ENCODE measurements at regions of chr18 and their contacts with region 1.

Region 1: GRCh38 chr18:51789871-51790270 is 550.1 kb upstream of the DCC start:
- DNase-seq: no peak
- ATAC-seq: no peak
- H3K4me3 ChIP-seq: no peak overlapping the region
- H3K27ac ChIP-seq: no peak overlapping the region
- H3K4me1 ChIP-seq: no peaks in the 10 kb centered on the region
- H3K27me3 ChIP-seq: no peaks in the 10 kb centered on the region
- CTCF ChIP-seq: no peak
- EP300 ChIP-seq: no peak
- POLR2A ChIP-seq: no peak
- RAD21 ChIP-seq: no peak

Region 2: DNA sequence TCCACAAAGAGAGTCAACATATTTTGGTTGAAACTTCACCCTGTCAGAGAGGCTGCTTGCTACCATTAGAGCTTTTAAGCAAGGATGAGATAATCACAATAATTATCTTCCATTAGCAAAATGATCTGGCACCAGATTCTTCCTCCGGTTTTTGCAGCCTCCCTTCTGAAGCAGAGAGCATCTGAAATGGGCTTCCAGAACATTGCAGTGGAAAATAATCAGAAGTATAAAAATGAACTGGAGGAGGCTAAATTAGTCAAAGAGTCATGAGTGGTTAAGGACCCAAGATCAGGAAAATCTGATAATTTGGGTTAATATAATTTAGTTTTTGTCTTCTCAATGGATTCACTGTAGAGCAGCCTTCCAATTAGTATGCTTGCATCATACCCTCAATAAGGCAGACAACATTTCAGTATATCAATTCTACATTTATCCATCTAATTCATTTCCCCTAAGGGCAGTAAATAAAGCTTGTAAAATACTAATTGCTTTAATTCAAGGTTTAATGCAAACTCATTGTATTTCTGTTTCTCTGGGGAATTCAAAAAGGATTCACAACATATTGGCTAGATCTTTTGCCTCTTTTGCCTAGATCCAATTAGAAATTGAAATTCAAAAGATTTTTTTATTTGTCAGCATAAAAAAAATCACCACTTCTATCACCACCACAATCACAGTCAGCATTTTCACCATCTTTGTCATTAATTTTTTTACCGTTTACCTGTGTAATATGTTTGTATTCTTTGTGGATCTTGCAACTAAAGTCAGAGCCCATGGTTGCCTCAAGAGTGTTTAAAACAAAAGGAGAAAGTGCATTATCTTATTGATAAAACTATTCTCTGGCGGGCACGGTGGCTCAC is 12.9 kb after region 1 on chr18:
- CTCF ChIA-PET with region 1: interaction called, 3 read pairs
- POLR2A ChIA-PET with region 1: no interaction called
- RAD21 ChIA-PET with region 1: no interaction called
- SMC1A ChIA-PET with region 1: interaction called, 17 read pairs
- in situ Hi-C with region 1: no loop called
- intact Hi-C with region 1: no loop called
- DNase-seq: no peak
- ATAC-seq: no peak
- H3K4me3 ChIP-seq: no peak overlapping the region
- H3K27ac ChIP-seq: no peak overlapping the region
- H3K4me1 ChIP-seq: no peaks in the 10 kb centered on the region
- H3K27me3 ChIP-seq: no peaks in the 10 kb centered on the region
- CTCF ChIP-seq: no peak
- EP300 ChIP-seq: no peak
- POLR2A ChIP-seq: no peak
- RAD21 ChIP-seq: no peak

Region 3: DNA sequence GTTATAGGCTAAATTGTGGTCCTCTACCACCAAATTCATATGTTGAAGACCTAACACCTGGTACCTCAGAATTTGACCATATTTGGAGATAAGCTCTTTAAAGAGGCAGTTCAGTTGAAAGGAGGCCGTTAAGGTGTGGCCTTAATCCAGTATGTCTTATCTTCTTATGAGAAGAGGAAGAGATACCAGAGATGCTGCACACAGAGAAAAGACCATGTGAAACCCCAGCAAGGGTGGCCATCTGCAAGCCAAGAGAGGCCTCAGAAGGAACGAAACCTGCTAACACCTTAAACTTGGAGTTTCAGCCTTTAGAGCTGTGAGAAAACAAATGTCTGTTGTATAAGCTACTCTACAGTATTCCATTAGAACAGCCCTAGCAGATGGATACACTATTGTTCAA is 22.0 kb after region 1 on chr18:
- CTCF ChIA-PET with region 1: interaction called, 3 read pairs
- POLR2A ChIA-PET with region 1: no interaction called
- RAD21 ChIA-PET with region 1: no interaction called
- SMC1A ChIA-PET with region 1: interaction called, 13 read pairs
- in situ Hi-C with region 1: no loop called
- intact Hi-C with region 1: no loop called
- DNase-seq: no peak
- ATAC-seq: peak; percentile 34; the same call in 2 of the 3 replicates
- H3K4me3 ChIP-seq: no peak overlapping the region
- H3K27ac ChIP-seq: peak overlapping the region; percentile 33; the same call in 1 of the 2 replicates
- H3K4me1 ChIP-seq: peaks cover 5% of the 10 kb centered on the region; the same call in 1 of the 2 replicates
- H3K27me3 ChIP-seq: no peaks in the 10 kb centered on the region
- CTCF ChIP-seq: no peak
- EP300 ChIP-seq: no peak
- POLR2A ChIP-seq: no peak
- RAD21 ChIP-seq: no peak

Region 4: DNA sequence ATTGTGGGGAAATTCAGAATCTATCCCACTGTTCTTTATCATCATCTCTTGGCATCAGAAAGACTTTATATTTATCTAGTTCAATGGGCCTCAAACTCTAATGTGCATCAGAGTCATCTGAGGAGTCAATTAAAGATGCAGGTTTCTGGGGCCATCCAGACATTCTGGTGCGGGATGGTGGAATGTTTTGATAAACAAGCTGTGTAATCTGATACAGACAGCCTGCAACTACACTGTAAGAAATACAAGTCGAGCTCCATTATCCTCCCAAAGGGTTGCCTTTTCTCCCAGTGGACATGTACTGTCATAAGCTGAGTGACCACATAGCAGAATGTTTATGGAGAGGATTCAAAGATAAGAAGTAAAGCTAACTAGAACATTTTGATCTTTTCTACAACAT is 34.9 kb after region 1 on chr18:
- CTCF ChIA-PET with region 1: no interaction called
- POLR2A ChIA-PET with region 1: no interaction called
- RAD21 ChIA-PET with region 1: no interaction called
- SMC1A ChIA-PET with region 1: no interaction called
- in situ Hi-C with region 1: no loop called
- intact Hi-C with region 1: no loop called
- DNase-seq: no peak
- ATAC-seq: no peak
- H3K4me3 ChIP-seq: no peak overlapping the region
- H3K27ac ChIP-seq: no peak overlapping the region
- H3K4me1 ChIP-seq: 0 out of 2 replicates have a peak, but pooled peaks cover 5% of the 10 kb centered on the region
- H3K27me3 ChIP-seq: no peaks in the 10 kb centered on the region
- CTCF ChIP-seq: no peak
- EP300 ChIP-seq: no peak
- POLR2A ChIP-seq: no peak
- RAD21 ChIP-seq: no peak

Region 5: DNA sequence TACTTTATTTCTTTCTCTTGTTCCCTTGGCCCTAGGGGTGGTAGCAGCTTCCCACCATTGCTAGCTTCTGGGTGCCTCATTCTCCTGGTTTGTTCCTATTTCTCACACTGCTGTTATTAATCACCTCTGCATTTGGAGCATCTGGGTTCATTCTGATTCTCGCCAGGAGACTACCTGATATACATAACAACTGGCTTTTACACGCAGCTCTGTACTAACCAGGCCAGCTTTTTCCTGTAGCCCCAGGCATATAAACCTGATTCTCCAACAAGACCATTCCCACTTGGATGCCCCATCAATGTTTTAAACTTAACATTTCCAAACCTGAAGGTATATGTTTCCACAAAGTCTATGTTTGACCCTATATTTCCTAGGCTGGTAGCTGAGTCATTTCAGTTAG is 146.2 kb after region 1 on chr18:
- CTCF ChIA-PET with region 1: no interaction called
- POLR2A ChIA-PET with region 1: no interaction called
- RAD21 ChIA-PET with region 1: no interaction called
- SMC1A ChIA-PET with region 1: no interaction called
- in situ Hi-C with region 1: no loop called
- intact Hi-C with region 1: no loop called
- DNase-seq: no peak
- ATAC-seq: no peak
- H3K4me3 ChIP-seq: no peak overlapping the region
- H3K27ac ChIP-seq: no peak overlapping the region
- H3K4me1 ChIP-seq: no peaks in the 10 kb centered on the region
- H3K27me3 ChIP-seq: no peaks in the 10 kb centered on the region
- CTCF ChIP-seq: no peak
- EP300 ChIP-seq: no peak
- POLR2A ChIP-seq: no peak
- RAD21 ChIP-seq: no peak

Region 6: GRCh38 chr18:52093171-52093570 is 303.3 kb after region 1 on chr18:
- CTCF ChIA-PET with region 1: no interaction called
- POLR2A ChIA-PET with region 1: no interaction called
- RAD21 ChIA-PET with region 1: no interaction called
- SMC1A ChIA-PET with region 1: no interaction called
- in situ Hi-C with region 1: no loop called
- intact Hi-C with region 1: no loop called
- DNase-seq: no peak
- ATAC-seq: no peak
- H3K4me3 ChIP-seq: no peak overlapping the region
- H3K27ac ChIP-seq: no peak overlapping the region
- H3K4me1 ChIP-seq: no peaks in the 10 kb centered on the region
- H3K27me3 ChIP-seq: no peaks in the 10 kb centered on the region
- CTCF ChIP-seq: no peak
- EP300 ChIP-seq: no peak
- POLR2A ChIP-seq: no peak
- RAD21 ChIP-seq: no peak

Measured in GM12878 (cell line).